Aorta (tissue), 5 donors: ENCODE measurements at regions of chr12 and their contacts with region 1.

Region 1: DNA sequence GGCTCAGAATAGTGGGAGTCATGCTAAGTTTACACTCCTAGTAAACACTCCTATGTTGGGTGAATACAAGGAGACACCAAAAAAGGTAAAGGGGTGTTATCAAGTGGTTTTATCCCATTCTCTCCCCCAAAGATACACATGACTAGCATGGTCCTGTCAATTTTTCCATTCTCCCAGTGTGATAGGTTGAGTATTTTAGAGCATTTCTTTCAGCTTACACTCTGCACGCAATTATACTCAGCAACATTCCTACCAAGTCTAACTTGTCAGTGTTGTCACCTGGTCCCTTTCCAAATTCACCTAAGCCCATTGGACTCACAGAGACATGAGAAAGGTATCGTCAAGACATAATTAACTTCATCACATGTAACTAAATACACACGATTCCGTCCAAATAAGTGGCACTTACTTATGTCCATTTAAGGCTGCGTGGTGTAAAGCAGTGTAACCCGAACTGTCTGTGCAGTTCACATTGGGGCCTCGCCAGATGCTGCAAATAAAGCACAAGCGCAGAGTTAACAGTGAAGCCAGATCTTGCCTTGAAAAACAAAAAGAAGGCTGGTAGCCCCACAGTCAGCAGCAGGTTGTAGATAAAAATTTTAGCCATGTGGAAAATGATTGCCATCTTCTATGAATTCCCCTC is 159.7 kb downstream of the ANKS1B start:
- DNase-seq: peak in 1 of 2 donors; percentile 27
- ATAC-seq: peak; percentile 63
- H3K4me3 ChIP-seq: peak overlapping the region in 1 of 2 donors; percentile 18
- H3K27ac ChIP-seq: no peak overlapping the region
- H3K4me1 ChIP-seq: no peaks in the 10 kb centered on the region
- H3K27me3 ChIP-seq: no peaks in the 10 kb centered on the region

Region 2: DNA sequence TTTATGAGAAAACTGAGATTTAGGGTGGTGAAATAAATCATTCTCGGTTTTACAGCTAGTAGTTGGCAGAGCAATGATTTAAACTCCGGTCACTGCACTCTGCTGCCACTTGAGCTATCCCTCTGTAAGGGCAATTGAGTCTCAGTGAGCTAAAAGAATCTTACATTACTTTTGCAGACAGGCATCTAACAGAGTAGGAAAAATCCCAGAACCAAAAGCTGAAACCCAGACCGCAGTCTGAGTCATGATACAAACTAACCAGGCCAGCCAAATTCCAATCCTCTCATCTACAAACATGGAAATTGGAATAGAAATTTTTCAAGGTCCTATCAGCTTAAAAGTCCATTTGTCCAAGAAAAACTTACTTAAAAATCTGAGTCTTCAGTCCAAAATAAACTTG is 86.1 kb after region 1 on chr12:
- intact Hi-C with region 1: loop called in 1 of 2 experiments (anchors 10 kb)
- DNase-seq: peak in 1 of 2 donors; percentile 56
- ATAC-seq: peak; percentile 92
- H3K4me3 ChIP-seq: no peak overlapping the region
- H3K27ac ChIP-seq: no peak overlapping the region
- H3K4me1 ChIP-seq: peaks cover 4% of the 10 kb centered on the region in 2 donors
- H3K27me3 ChIP-seq: no peaks in the 10 kb centered on the region